ENCODE measurements at regions of chr6 and their contacts with region 1.

Region 1: DNA sequence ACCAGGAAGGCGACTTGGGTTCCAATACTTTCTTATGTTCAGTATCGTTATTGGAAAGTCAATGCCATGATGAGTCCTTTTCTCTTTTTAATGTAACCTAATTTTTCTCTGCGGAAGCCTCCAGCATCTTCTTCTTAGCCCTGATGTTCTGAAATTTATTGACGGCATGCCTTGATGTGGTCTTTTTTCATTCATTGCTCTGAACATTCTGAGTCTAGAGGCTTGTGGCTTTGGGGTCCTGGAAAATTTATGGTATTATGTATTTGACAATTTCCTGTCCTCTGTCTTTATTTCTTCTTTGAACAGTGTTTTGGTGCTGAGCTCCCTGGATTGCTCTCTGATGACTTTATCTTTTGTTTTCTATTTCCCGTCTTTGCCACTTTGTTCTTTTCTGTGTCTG is 28.7 kb upstream of the MAS1 start:
- DNase-seq: no peak
- ATAC-seq: no peak
- H3K4me3 ChIP-seq: no peak overlapping the region
- H3K27ac ChIP-seq: no peak overlapping the region
- H3K4me1 ChIP-seq: no peaks in the 10 kb centered on the region
- H3K27me3 ChIP-seq: peaks cover 4% of the 10 kb centered on the region; the same call in 1 of the 2 replicates
- CTCF ChIP-seq: no peak
- POLR2A ChIP-seq: no peak
- RAD21 ChIP-seq: no peak

Region 2: DNA sequence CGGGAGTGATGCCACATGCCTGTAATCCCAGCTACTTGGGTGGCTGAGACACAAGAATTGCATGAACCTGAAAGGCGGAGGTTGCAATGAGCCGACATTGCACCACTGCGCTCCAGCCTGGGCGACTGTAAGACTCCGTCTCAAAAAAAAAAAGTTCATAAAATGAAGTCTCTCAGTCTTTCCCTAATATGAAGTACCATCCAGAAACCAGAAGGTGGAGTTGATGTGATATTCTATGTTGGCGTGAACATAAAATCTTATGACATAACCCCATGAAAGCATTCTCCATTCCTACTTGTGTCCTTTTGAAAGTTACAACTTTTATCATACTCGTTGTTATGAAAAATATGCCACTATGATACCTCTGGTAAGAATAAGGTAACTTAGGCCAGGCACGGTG is 174.8 kb before region 1 on chr6:
- CTCF ChIA-PET with region 1: no interaction called
- POLR2A ChIA-PET with region 1: no interaction called
- RAD21 ChIA-PET with region 1: no interaction called
- intact Hi-C with region 1: no loop called
- DNase-seq: no peak
- ATAC-seq: no peak
- H3K4me3 ChIP-seq: no peak overlapping the region
- H3K27ac ChIP-seq: no peak overlapping the region
- H3K4me1 ChIP-seq: peaks cover 8 to 15% of the 10 kb centered on the region in 2 experiments
- H3K27me3 ChIP-seq: no peaks in the 10 kb centered on the region
- CTCF ChIP-seq: no peak
- POLR2A ChIP-seq: no peak
- RAD21 ChIP-seq: no peak

Region 3: GRCh38 chr6:159742165-159742564 is 119.9 kb before region 1 on chr6:
- CTCF ChIA-PET with region 1: no interaction called
- POLR2A ChIA-PET with region 1: no interaction called
- RAD21 ChIA-PET with region 1: no interaction called
- intact Hi-C with region 1: no loop called
- DNase-seq: no peak
- ATAC-seq: no peak
- H3K4me3 ChIP-seq: no peak overlapping the region
- H3K27ac ChIP-seq: no peak overlapping the region
- H3K4me1 ChIP-seq: no peaks in the 10 kb centered on the region
- H3K27me3 ChIP-seq: no peaks in the 10 kb centered on the region
- CTCF ChIP-seq: no peak
- POLR2A ChIP-seq: no peak
- RAD21 ChIP-seq: no peak

Region 4: DNA sequence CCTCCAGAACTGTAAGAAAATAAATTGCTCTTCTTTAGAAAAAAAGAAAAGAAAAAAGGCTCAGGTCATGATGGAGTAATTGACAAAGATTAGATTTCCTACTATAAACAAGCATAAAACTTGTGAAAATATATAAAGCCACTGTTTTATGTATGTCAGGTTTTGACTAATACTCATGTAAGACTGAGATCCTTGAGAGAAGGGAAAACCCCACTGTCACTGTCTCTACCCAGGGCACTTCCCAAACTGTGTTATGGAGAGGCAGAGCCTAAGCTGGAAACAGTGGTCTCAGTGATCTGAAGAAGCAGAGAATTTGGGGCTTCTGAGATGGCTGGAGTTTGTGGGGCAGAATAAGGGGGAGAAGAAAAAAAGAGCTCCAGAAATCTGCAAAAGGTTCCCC is 92.6 kb before region 1 on chr6:
- CTCF ChIA-PET with region 1: no interaction called
- POLR2A ChIA-PET with region 1: no interaction called
- RAD21 ChIA-PET with region 1: no interaction called
- intact Hi-C with region 1: no loop called
- DNase-seq: no peak
- ATAC-seq: no peak
- H3K4me3 ChIP-seq: no peak overlapping the region
- H3K27ac ChIP-seq: no peak overlapping the region
- H3K4me1 ChIP-seq: no peaks in the 10 kb centered on the region
- H3K27me3 ChIP-seq: no peaks in the 10 kb centered on the region
- CTCF ChIP-seq: no peak
- POLR2A ChIP-seq: no peak
- RAD21 ChIP-seq: no peak

Region 5: DNA sequence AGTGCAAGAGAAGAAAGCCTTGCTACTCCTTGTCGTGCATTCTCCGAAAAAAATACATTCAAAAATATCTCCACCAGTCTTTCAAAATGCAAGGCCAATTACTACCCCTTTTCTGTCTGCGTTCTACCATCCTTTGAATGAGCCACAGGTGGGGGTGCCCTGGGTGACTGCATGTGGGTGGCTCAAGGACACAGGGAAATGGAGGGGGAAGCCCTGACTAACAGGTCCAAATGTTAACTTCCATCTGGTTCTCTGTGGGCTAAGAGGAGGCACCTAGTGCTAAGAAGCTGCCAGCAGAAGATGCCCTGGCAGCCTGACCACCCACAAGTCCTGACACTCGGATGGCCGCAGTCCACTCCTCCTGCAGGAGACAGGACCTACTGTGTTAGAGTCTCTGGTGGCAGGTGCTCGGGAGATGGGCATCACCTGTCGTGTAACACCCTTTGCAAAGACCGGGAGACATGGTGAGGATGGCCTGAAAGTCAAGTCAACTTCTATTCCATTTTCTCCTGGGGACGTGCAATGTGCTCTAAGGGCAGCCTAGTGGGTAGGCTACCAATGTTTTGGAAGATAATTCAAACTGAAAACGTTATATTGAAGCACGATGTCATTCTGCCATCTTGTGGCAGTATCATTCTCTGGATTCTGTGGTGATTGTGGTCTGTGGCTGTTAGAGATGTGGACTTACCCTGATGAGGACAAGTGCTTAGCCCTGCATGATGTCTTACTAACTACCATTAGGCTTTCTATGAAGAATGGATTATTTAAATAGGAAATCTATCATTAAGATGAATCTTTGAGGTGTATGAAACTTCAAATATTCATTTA is 79.4 kb after region 1 on chr6:
- CTCF ChIA-PET with region 1: interaction called, 5 read pairs
- POLR2A ChIA-PET with region 1: no interaction called
- RAD21 ChIA-PET with region 1: no interaction called
- intact Hi-C with region 1: loop called (anchors 1 kb)
- DNase-seq: peak; percentile 12
- ATAC-seq: peak; percentile 73
- H3K4me3 ChIP-seq: no peak overlapping the region
- H3K27ac ChIP-seq: no peak overlapping the region
- H3K4me1 ChIP-seq: no peaks in the 10 kb centered on the region
- H3K27me3 ChIP-seq: no peaks in the 10 kb centered on the region
- CTCF ChIP-seq: peak; percentile 31 to 43 (median 39); a peak in 3 of 6 replicates
- POLR2A ChIP-seq: no peak
- RAD21 ChIP-seq: peak; percentile 68

Region 6: GRCh38 chr6:160005861-160006540 is 143.9 kb after region 1 on chr6:
- CTCF ChIA-PET with region 1: no interaction called
- POLR2A ChIA-PET with region 1: no interaction called
- RAD21 ChIA-PET with region 1: no interaction called
- intact Hi-C with region 1: no loop called
- DNase-seq: no peak
- ATAC-seq: no peak
- H3K4me3 ChIP-seq: no peak overlapping the region
- H3K27ac ChIP-seq: no peak overlapping the region
- H3K4me1 ChIP-seq: no peaks in the 10 kb centered on the region
- H3K27me3 ChIP-seq: no peaks in the 10 kb centered on the region
- CTCF ChIP-seq: no peak
- POLR2A ChIP-seq: no peak
- RAD21 ChIP-seq: no peak

Region 7: GRCh38 chr6:160102956-160103824 is 241.1 kb after region 1 on chr6:
- CTCF ChIA-PET with region 1: interaction called, 6 read pairs
- POLR2A ChIA-PET with region 1: no interaction called
- RAD21 ChIA-PET with region 1: no interaction called
- intact Hi-C with region 1: loop called (anchors 1 kb)
- DNase-seq: peak; percentile 46
- ATAC-seq: peak; percentile 86
- H3K4me3 ChIP-seq: no peak overlapping the region
- H3K27ac ChIP-seq: no peak overlapping the region
- H3K4me1 ChIP-seq: no peaks in the 10 kb centered on the region
- H3K27me3 ChIP-seq: no peaks in the 10 kb centered on the region
- CTCF ChIP-seq: peak; percentile 33 to 62 (median 60); a peak in 5 of 6 replicates
- POLR2A ChIP-seq: no peak
- RAD21 ChIP-seq: peak; percentile 49

Region 8: GRCh38 chr6:160455541-160456213 is 593.6 kb after region 1 on chr6:
- CTCF ChIA-PET with region 1: interaction called, 23 read pairs
- POLR2A ChIA-PET with region 1: no interaction called
- RAD21 ChIA-PET with region 1: interaction called, 9 to 10 read pairs
- intact Hi-C with region 1: loop called (anchors 2 kb)
- DNase-seq: peak; percentile 29
- ATAC-seq: peak; percentile 89
- H3K4me3 ChIP-seq: no peak overlapping the region
- H3K27ac ChIP-seq: no peak overlapping the region
- H3K4me1 ChIP-seq: no peaks in the 10 kb centered on the region
- H3K27me3 ChIP-seq: 0 out of 2 replicates have a peak, but pooled peaks cover 5% of the 10 kb centered on the region
- CTCF ChIP-seq: peak; percentile 87 to 99 (median 91)
- POLR2A ChIP-seq: no peak
- RAD21 ChIP-seq: peak; percentile 98

Region 9: DNA sequence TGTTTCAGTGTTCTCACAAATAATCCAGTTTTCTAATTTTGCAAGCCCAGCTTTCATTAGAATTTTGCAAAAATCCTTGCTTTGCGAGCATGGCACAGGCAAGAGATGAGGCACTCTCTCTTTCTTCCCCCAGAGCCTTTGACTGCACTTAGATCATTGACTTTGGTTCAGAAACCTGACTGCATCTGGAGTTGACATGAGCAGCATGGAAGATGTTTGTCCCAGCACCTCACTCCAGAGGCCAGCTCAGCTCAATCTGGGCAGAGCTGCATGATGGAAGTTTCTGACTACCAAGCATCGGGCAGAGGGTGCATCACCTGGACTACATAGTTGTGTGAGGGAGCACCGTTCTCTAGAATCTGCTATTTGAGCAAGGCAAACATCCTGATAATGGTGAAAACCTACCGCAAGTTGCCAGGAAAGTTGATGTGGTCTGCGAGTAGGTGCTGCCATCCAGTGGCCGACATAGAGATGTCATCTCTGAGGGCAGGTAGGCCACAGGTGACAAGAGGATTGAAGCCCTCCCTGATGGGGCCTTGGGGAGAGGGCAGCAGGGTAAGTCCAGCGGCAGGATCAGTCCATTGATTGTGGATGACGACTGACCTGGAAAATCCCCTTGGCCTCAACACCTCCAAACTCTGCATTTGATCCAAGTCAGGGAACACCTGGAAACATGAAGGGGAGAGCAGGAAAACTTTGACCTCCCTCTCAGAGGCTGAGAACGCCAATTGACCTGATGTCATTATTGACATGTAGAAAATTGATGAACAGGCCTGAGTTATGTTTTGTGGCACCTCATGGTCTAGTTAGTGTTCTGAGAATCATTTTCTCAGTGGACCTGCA is 805.8 kb after region 1 on chr6:
- CTCF ChIA-PET with region 1: no interaction called
- POLR2A ChIA-PET with region 1: no interaction called
- RAD21 ChIA-PET with region 1: no interaction called
- intact Hi-C with region 1: loop called (anchors 10 kb)
- DNase-seq: peak; percentile 35
- ATAC-seq: peak; percentile 94
- H3K4me3 ChIP-seq: no peak overlapping the region
- H3K27ac ChIP-seq: no peak overlapping the region
- H3K4me1 ChIP-seq: no peaks in the 10 kb centered on the region
- H3K27me3 ChIP-seq: 0 out of 2 replicates have a peak, but pooled peaks cover 11% of the 10 kb centered on the region
- CTCF ChIP-seq: peak; percentile 52 to 86 (median 77); a peak in 5 of 6 replicates
- POLR2A ChIP-seq: no peak
- RAD21 ChIP-seq: peak; percentile 81

Measured in HCT116 (cell line).